Common myeloid progenitor, CD34-positive (primary cell): ENCODE measurements at regions of chr1 and their contacts with region 1.

Region 1: DNA sequence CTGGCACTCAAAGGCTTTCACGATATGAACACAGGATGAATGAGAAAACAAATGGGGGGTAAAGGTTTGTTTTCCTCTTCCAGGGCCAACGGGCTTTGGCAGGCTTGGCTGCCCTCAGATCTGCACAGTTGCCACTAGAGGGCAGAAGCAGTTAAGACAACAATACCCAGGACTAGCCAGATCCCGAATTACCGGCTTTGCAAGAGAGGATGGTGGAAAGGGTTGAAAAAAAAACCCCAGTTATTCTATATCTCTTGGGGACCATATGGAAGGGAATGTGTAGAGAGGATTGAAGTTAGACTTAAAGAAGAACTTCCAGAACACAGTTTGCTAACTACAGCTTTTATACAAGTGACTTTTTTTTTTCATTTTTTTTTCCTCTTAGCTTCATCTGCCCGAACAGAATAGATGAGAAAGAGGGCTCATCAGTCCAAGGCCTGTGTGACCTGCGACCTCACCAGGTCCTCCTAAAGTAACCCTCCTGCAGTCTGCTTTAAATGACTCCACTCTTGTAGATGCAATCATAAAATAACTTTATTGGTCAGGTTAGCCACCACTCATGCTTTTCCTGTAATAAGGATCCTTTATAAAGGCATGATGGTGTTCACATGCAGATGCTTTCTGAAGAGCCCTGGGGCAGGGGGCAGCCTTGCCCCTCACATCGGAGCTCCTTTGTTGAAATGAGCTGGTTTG is 10.7 kb downstream of the FMOD start:
- DNase-seq: peak; percentile 78 to 84 (median 82)
- H3K4me3 ChIP-seq: no peak overlapping the region
- H3K27ac ChIP-seq: no peak overlapping the region
- H3K4me1 ChIP-seq: peaks cover 0 to 5% (median 0%) of the 10 kb centered on the region in 4 experiments
- H3K27me3 ChIP-seq: peaks cover 0 to 22% (median 10%) of the 10 kb centered on the region in 5 experiments

Region 2: DNA sequence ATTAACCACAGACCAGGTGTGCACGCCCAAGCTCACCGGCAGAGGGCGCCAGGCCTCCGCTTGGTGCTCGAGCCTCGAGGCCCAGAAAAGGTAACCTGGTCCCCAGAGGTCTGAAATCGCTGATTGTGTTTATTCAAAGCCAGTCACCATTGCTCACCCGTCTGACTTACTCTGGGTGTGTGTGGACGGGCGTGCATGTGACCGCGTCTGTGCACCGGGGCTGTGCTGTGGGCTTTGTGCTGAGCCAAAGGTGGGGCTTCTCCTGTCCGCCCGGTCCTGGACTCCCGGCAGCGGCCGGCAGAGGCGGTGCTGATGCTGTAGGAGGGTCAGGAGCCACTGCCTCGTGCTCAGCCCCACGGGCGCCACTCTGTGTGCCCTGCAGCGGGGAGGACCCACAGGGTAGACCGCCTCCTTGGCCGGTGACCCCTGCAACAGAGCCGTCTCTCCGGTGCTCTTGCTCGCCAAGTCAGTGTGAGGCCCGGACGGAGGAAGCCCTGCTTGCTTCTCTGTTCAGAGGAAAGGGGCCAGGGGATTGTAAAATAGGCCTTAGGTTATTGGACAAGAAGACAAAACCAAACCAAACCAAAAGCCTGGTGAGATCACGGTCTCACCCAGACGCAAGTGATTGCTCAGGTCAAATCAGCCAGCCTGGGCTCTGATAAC is 66.9 kb before region 1 on chr1:
- CTCF ChIA-PET with region 1: interaction called, 322 read pairs
- POLR2A ChIA-PET with region 1: interaction called, 4 read pairs
- DNase-seq: peak; percentile 78 to 89 (median 86)
- H3K4me3 ChIP-seq: peak overlapping the region in 3 of 7 experiments; percentile 38 to 52 (median 46)
- H3K27ac ChIP-seq: no peak overlapping the region
- H3K4me1 ChIP-seq: peaks cover 7 to 52% (median 42%) of the 10 kb centered on the region in 4 experiments
- H3K27me3 ChIP-seq: no peaks in the 10 kb centered on the region

Region 3: DNA sequence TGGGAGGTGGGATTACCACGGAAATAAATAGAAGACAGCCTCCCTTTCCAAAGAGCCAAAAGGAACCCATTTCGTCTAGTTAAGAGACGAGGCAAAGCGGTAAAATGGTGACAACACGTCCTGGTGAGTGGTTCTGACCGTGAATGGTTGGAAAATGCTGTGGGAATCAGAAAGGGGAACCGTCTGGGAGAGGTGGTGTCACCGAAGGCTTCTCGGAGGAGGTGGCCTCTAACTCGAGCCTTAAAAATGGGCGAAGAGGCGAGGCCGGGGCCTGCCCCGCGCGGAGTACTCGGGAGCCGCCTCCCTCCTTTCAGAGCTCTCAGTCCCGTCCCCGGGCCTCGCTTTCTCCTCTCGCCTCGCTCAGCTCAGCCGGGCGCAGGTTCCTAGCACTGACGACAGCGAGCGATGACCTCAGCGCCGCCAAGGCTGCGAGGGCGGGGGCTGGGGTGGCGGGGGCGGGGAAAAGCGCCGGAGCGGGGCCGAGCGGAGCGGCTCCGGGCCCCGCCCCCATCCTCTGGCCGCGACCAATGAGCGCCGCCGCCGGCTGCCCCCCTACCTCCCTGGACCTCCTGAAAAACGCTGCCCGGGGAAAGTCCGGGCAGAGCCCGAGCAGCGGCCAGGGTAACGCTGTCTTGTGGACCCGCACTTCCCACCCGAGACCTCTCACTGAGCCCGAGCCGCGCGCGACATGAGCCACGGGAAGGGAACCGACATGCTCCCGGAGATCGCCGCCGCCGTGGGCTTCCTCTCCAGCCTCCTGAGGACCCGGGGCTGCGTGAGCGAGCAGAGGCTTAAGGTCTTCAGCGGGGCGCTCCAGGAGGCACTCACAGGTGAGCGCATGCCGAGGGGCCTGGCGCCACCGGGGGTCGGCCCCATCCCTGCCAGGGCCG is 35.1 kb before region 1 on chr1 and contains the start of gene BTG2:
- CTCF ChIA-PET with region 1: interaction called, 224 read pairs
- POLR2A ChIA-PET with region 1: interaction called, 26 read pairs
- DNase-seq: peak; percentile 83 to 91 (median 91)
- H3K4me3 ChIP-seq: peak within 1 kb of the TSS; percentile 75 to 98 (median 89)
- H3K27ac ChIP-seq: peak within 1 kb of the TSS; percentile 80 to 91
- H3K4me1 ChIP-seq: peaks cover 34 to 79% (median 62%) of the 10 kb centered on the region in 4 experiments
- H3K27me3 ChIP-seq: no peaks in the 10 kb centered on the region

Region 4: DNA sequence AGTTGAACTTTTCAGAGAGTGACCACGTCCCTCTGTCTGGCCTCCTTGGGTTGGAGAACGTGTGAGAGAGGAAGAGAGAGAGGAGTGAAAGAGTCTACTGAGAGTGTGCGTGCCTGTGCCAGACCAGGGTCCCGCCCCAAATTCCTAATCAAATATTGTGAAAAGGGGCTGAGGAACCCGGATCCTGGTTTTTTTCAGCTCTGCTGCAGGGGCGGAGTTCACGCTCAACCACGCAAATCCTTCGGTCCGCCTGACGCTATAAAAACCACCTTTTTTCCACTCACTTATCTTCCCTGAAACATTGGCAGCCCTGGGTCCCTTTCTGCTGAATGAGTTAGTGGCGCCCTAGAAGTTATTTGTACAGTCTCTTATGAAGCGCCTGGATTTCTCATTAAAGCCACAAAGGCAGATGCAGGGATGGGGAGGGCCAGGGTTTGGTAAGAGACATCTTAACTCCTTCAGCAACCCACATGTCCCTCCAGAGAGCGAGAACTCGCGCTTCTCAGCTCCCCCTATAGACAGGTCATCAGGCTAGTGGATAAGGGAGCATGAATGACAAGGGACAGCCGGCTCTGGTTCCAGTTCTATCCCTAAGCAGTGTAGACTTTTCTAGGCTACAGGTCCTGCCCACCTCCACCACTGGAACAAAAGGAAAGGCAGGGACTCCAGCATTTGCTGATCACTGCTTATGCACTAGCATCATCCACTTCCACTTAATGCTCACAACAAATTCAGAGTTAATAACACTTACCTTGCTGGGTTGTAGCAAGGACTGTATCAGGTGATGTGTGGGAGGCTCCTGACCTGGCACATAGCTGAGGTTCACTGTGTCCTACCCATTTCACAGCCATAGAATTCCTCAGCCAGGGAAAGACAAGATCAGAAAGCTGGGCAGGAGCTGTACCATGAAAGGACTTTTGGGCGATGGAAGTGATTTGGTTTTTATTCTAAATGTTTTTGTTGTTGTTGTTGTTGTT is 11.1 kb after region 1 on chr1 and contains the start of gene FMOD:
- CTCF ChIA-PET with region 1: interaction called, 83 read pairs
- POLR2A ChIA-PET with region 1: interaction called, 4 read pairs
- DNase-seq: peak; percentile 41 to 70 (median 62)
- H3K4me3 ChIP-seq: peak within 1 kb of the TSS in 1 of 7 experiments; percentile 59
- H3K27ac ChIP-seq: no peak within 1 kb of the TSS
- H3K4me1 ChIP-seq: peaks cover 0 to 8% (median 0%) of the 10 kb centered on the region in 4 experiments
- H3K27me3 ChIP-seq: peaks cover 0 to 14% (median 0%) of the 10 kb centered on the region in 5 experiments

Region 5: GRCh38 chr1:203440771-203441170 is 100.5 kb after region 1 on chr1:
- CTCF ChIA-PET with region 1: interaction called, 17 read pairs
- POLR2A ChIA-PET with region 1: no interaction called
- DNase-seq: peak; percentile 4 to 20 (median 15)
- H3K4me3 ChIP-seq: no peak overlapping the region
- H3K27ac ChIP-seq: no peak overlapping the region
- H3K4me1 ChIP-seq: no peaks in the 10 kb centered on the region
- H3K27me3 ChIP-seq: peaks cover 0 to 14% (median 8%) of the 10 kb centered on the region in 5 experiments

Region 6: GRCh38 chr1:203475012-203475981 is 135.0 kb after region 1 on chr1 and contains the start of gene PRELP:
- CTCF ChIA-PET with region 1: no interaction called
- POLR2A ChIA-PET with region 1: no interaction called
- DNase-seq: no peak
- H3K4me3 ChIP-seq: no peak within 1 kb of the TSS
- H3K27ac ChIP-seq: no peak within 1 kb of the TSS
- H3K4me1 ChIP-seq: peaks cover 0 to 3% (median under 1%) of the 10 kb centered on the region in 4 experiments
- H3K27me3 ChIP-seq: peaks cover 0 to 6% (median 0%) of the 10 kb centered on the region in 5 experiments